ENCODE measurements at regions of chr6 and their contacts with region 1.

Region 1: GRCh38 chr6:99330159-99330558 is 19.3 kb downstream of the FAXC start:
- DNase-seq: no peak
- H3K4me3 ChIP-seq: no peak overlapping the region
- H3K27ac ChIP-seq: peak overlapping the region in 3 of 4 donors; percentile 3 to 35 (median 33)
- H3K4me1 ChIP-seq: peaks cover 0 to 24% (median 14%) of the 10 kb centered on the region in 4 donors
- H3K27me3 ChIP-seq: no peaks in the 10 kb centered on the region
- CTCF ChIP-seq: peak; percentile 67 to 81 (median 70)
- EP300 ChIP-seq: no peak
- POLR2A ChIP-seq: no peak

Region 2: DNA sequence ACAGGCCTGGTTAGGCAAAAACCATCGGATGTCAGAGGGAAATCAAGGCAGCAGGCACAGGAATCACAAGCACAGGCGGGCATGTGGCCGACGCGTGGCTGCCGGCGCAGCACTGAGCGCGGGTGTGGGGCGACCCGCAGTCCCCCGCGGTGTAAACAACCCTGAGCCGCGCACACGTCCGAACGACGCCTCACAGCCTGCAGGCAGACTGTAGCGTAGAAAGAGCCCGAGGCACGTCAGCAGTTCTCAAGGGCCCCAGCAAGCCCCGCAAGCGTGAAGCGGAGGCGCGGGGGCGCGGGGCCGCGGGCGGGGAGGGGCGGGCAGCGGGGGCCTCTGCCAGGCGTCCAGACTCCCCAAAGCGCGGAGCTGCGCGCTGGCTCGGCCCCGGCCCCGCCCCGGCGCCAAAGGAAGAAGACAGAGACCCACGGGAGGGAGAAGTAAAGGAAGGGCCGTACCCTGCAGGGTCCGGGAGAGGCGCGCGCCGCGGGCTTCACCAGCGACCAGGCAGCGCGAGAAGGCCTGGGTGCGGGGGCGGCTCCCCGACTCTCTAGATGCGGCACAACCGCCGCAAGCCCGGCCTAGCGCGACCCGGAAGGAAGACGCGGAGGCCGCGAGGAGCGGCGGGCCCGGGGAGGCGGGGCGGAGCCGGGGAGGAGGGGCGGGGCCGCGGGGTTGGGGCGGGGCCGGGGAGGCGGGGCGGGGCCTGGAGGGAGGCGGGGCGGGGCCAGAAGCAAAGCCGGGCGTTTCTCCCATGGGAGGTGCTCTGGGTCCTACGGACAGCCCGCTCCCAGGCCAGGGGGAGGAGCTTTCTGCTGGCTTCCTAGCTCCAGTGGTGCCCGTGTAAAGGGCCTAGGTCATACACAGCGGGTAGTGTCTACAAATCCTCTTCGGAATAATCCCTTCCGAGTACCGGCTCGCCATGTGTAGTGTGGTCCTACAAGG is 382.5 kb before region 1 on chr6 and contains the start of gene FBXL4:
- intact Hi-C with region 1: no loop called
- DNase-seq: no peak
- H3K4me3 ChIP-seq: peak within 1 kb of the TSS; percentile 84 to 96 (median 92)
- H3K27ac ChIP-seq: peak within 1 kb of the TSS; percentile 87 to 94 (median 92)
- H3K4me1 ChIP-seq: peaks cover 7 to 33% (median 32%) of the 10 kb centered on the region in 4 donors
- H3K27me3 ChIP-seq: no peaks in the 10 kb centered on the region
- CTCF ChIP-seq: no peak
- EP300 ChIP-seq: no peak
- POLR2A ChIP-seq: peak; percentile 42
- total RNA-seq, gene FBXL4: 11.8 to 17.8 (median 15.6) TPM

Region 3: DNA sequence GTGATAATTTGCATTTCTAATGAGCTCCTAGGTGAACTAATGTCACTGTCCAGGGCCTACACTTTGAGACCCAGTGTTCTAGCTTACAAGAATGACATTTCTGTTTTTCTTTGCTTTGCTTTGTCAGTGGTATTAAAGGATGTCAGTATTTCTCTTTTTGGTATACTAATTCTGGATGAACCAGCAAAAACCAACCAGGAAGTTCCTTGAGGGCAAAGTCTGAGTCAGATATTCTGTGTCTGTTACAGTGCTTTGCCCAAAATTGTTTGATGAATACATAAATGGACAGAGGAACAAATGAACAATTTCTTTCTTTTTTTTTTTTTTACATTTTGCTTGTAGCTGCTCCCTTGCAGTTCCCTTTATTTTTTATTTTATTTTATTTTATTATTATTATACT is 48.5 kb after region 1 on chr6:
- intact Hi-C with region 1: no loop called
- DNase-seq: no peak
- H3K4me3 ChIP-seq: no peak overlapping the region
- H3K27ac ChIP-seq: no peak overlapping the region
- H3K4me1 ChIP-seq: no peaks in the 10 kb centered on the region
- H3K27me3 ChIP-seq: no peaks in the 10 kb centered on the region
- CTCF ChIP-seq: no peak
- EP300 ChIP-seq: no peak
- POLR2A ChIP-seq: no peak

Region 4: DNA sequence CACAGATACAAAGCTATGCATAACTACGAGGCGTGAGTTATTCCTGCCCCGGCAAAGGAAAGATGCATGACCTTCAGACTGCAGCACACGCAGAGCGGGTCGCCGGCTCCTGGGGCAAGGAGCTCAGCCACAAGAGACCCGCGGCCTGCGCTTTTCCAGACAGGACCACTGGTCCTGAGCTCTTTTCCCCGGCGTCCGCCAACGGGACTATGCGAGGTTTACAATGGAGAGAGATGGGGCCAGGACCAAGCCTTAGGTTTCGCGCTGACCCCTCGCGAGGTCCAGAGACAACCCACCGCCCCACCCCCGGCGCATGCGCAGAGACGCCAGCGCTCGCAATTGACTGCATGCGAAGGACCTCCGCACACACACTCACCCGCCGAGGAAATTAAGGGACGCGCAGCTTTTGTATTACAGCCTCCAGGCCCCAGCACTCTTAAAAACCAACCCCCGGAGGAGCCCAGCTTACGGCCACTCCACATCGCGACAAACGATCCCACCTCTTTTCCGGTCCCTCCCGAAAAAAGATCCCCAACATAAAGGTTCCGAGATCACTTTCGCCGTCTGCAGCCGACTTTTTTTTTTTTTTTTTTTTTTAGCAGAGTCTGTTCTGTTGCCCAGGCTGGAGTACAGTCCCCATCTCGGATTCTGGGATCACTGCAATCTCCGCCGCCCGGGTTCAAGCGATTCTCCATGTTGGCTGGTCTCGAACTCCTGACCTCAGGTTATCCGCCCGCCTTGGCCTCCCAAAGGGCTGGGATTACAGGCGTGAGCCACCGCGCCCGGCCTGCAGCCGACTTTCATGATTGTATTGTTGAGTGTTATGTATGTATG is 63.8 kb after region 1 on chr6 and contains the start of gene COQ3:
- intact Hi-C with region 1: loop called (anchors 5 kb)
- DNase-seq: no peak
- H3K4me3 ChIP-seq: peak within 1 kb of the TSS; percentile 74 to 90 (median 83)
- H3K27ac ChIP-seq: peak within 1 kb of the TSS; percentile 83 to 89 (median 88)
- H3K4me1 ChIP-seq: peaks cover 3 to 19% (median 14%) of the 10 kb centered on the region in 4 donors
- H3K27me3 ChIP-seq: no peaks in the 10 kb centered on the region
- CTCF ChIP-seq: no peak
- EP300 ChIP-seq: no peak
- POLR2A ChIP-seq: no peak
- total RNA-seq, gene COQ3: 3.4 to 9.1 (median 6.1) TPM

Region 5: DNA sequence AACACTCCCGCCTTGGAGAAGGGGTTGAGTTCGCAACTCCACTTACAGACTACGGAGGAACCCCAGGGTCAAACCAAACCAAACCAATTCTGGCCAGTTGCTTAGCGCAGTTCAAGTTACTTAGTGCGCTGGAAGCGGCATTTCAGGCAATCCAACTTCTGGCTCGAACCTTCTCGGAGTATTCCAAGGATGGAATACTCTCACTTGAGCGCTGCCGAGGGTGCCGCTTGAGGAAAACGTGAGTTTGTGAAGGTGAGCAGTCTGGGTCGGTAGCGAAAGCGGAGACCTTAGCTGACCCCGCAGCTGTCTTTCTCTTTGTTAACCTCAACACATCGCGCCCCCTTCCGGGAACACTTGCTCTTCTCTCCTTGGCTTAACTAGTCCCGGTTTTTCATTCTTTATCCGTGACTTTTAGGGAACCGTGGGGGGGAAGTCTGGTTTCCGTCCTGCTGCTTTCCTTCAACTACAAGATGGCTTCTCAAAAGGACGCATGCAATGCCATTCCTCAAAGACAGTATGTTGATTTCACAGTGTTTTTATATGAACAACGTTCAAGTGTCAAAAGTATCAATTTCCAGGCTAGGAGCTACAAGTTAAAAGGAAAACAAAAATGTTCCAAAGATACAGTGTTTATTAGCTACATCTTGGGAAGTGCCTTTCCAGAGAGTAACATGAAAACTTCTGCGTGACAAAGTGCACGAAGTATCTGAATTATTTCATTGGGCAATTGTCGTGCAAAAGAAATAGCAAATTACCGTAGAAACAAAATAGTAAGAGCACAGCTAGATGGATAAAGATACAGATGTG is 95.7 kb after region 1 on chr6:
- intact Hi-C with region 1: loop called (anchors 5 kb)
- DNase-seq: peak; percentile 96
- H3K4me3 ChIP-seq: peak overlapping the region; percentile 86 to 96 (median 93)
- H3K27ac ChIP-seq: peak overlapping the region; percentile 96 to 99 (median 97)
- H3K4me1 ChIP-seq: peaks cover 46 to 56% (median 54%) of the 10 kb centered on the region in 4 donors
- H3K27me3 ChIP-seq: no peaks in the 10 kb centered on the region
- CTCF ChIP-seq: peak; percentile 51 to 54 (median 52)
- EP300 ChIP-seq: no peak
- POLR2A ChIP-seq: no peak